OCI-LY7 (cell line): ENCODE measurements at regions of chr17 and their contacts with region 1.

Region 1: GRCh38 chr17:48878918-48879898 is 13.4 kb upstream of the ATP5MC1 start:
- DNase-seq: peak; percentile 76
- H3K4me3 ChIP-seq: no peak overlapping the region
- H3K27ac ChIP-seq: no peak overlapping the region
- H3K4me1 ChIP-seq: no peaks in the 10 kb centered on the region
- CTCF ChIP-seq: peak; percentile 97

Region 2: GRCh38 chr17:48671697-48672171 is 207.5 kb before region 1 on chr17:
- CTCF ChIA-PET with region 1: no interaction called
- POLR2A ChIA-PET with region 1: interaction called, 3 read pairs
- intact Hi-C with region 1: loop called (anchors 2 kb)
- DNase-seq: peak; percentile 38
- H3K4me3 ChIP-seq: no peak overlapping the region
- H3K27ac ChIP-seq: no peak overlapping the region
- H3K4me1 ChIP-seq: no peaks in the 10 kb centered on the region
- CTCF ChIP-seq: peak; percentile 85

Region 3: GRCh38 chr17:48678141-48678971 is 200.9 kb before region 1 on chr17:
- CTCF ChIA-PET with region 1: interaction called, 3 read pairs
- POLR2A ChIA-PET with region 1: interaction called, 3 read pairs
- intact Hi-C with region 1: loop called (anchors 2 kb)
- DNase-seq: peak; percentile 54
- H3K4me3 ChIP-seq: no peak overlapping the region
- H3K27ac ChIP-seq: no peak overlapping the region
- H3K4me1 ChIP-seq: no peaks in the 10 kb centered on the region
- CTCF ChIP-seq: peak; percentile 91

Region 4: GRCh38 chr17:48724251-48725003 is 154.8 kb before region 1 on chr17:
- CTCF ChIA-PET with region 1: interaction called, 6 read pairs
- POLR2A ChIA-PET with region 1: no interaction called
- intact Hi-C with region 1: loop called (anchors 2 kb)
- DNase-seq: peak; percentile 58
- H3K4me3 ChIP-seq: no peak overlapping the region
- H3K27ac ChIP-seq: no peak overlapping the region
- H3K4me1 ChIP-seq: no peaks in the 10 kb centered on the region
- CTCF ChIP-seq: peak; percentile 81

Region 5: DNA sequence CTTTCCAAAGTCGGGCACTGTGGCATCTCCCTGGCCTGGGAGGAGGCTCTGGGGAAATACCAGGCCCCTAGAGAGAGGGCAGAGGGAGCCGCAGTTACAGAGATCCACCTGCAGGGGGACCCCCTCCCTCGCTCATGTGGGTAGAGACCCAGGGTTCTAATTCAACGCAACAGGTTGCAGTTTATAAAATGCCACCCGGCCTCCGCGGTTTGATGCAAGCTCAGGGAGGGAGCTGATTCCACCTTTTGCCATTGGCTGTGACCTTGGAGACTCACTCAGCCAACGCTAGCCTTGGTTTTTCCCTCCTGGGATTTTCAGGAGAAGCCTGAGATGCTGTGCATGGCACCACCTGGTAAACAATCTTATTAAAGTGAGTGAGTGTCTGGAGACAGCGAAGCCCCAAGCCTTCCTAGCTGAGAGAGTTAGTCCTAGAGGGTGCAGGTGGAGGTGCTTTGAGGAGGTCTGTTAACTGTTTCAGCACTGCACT is 74.2 kb before region 1 on chr17:
- CTCF ChIA-PET with region 1: interaction called, 9 read pairs
- POLR2A ChIA-PET with region 1: no interaction called
- intact Hi-C with region 1: loop called (anchors 1 kb)
- DNase-seq: peak; percentile 55
- H3K4me3 ChIP-seq: no peak overlapping the region
- H3K27ac ChIP-seq: no peak overlapping the region
- H3K4me1 ChIP-seq: no peaks in the 10 kb centered on the region
- CTCF ChIP-seq: peak; percentile 92

Region 6: DNA sequence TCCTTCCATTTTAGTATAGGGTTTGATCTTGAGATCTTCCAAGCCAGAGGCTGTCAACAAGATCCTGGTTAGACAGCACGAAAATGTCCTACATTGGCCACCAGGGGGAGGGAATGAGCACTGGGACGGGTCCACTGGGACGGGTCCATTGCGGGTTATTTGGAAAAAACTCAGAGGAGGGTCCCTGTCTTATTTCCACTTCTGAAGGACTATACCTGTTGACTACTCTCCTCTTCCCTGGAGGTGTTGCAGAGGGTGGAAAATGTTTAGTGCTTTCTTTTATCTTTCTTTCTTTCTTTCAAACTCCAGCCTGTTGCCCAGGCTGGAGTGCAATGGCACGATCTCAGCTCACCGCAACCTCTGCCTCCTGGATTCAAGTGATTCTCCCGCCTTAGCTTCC is 64.7 kb before region 1 on chr17:
- CTCF ChIA-PET with region 1: interaction called, 3 read pairs
- POLR2A ChIA-PET with region 1: interaction called, 3 read pairs
- intact Hi-C with region 1: loop called (anchors 1 kb)
- DNase-seq: peak; percentile 61
- H3K4me3 ChIP-seq: no peak overlapping the region
- H3K27ac ChIP-seq: no peak overlapping the region
- H3K4me1 ChIP-seq: peaks cover 2% of the 10 kb centered on the region
- CTCF ChIP-seq: peak; percentile 83

Region 7: DNA sequence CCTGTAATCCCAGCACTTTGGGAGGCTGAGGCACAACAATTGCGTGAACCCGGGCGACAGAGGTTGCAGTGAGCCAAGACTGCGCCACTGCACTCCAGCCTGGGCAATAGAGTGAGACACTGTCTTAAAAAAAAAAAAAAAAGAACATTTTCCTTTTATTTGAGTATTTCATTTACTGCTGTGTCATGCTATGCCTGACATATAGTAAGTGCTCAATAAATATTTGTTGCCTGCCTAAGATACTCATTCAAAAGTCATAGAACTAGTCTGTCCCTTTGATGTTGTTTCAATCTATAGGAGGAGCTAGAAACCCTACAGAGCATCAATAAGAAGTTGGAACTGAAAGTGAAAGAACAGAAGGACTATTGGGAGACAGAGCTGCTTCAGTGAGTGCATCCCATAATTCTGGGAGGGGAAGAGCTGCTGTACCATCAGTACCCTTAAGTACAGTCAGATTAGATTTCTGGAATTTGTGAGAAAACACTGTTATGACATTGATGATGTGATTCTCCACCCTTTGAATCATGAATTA is 28.4 kb before region 1 on chr17:
- CTCF ChIA-PET with region 1: no interaction called
- POLR2A ChIA-PET with region 1: no interaction called
- intact Hi-C with region 1: no loop called
- DNase-seq: no peak
- H3K4me3 ChIP-seq: no peak overlapping the region
- H3K27ac ChIP-seq: no peak overlapping the region
- H3K4me1 ChIP-seq: no peaks in the 10 kb centered on the region
- CTCF ChIP-seq: no peak

Region 8: DNA sequence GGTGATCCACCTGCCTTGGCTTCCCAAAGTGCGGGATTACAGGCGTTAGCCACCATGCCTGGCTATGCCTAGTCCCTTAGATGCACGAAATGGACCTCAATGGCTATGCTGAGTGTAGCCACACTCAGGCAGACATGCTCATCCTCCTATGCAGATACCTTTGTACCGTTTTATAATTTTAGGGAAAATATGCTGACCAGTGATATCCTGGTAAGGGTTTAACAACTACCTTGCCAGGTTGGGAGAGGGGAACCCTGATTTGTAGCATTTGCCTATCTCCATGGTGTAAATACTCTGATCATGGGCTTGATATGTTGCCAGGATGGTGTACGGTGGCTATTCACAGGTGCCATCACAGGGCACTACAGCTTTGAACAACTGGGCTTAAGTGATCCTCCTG is 72.4 kb after region 1 on chr17:
- CTCF ChIA-PET with region 1: no interaction called
- POLR2A ChIA-PET with region 1: no interaction called
- intact Hi-C with region 1: no loop called
- DNase-seq: no peak
- H3K4me3 ChIP-seq: no peak overlapping the region
- H3K27ac ChIP-seq: no peak overlapping the region
- H3K4me1 ChIP-seq: peaks cover 9% of the 10 kb centered on the region
- CTCF ChIP-seq: no peak

Region 9: DNA sequence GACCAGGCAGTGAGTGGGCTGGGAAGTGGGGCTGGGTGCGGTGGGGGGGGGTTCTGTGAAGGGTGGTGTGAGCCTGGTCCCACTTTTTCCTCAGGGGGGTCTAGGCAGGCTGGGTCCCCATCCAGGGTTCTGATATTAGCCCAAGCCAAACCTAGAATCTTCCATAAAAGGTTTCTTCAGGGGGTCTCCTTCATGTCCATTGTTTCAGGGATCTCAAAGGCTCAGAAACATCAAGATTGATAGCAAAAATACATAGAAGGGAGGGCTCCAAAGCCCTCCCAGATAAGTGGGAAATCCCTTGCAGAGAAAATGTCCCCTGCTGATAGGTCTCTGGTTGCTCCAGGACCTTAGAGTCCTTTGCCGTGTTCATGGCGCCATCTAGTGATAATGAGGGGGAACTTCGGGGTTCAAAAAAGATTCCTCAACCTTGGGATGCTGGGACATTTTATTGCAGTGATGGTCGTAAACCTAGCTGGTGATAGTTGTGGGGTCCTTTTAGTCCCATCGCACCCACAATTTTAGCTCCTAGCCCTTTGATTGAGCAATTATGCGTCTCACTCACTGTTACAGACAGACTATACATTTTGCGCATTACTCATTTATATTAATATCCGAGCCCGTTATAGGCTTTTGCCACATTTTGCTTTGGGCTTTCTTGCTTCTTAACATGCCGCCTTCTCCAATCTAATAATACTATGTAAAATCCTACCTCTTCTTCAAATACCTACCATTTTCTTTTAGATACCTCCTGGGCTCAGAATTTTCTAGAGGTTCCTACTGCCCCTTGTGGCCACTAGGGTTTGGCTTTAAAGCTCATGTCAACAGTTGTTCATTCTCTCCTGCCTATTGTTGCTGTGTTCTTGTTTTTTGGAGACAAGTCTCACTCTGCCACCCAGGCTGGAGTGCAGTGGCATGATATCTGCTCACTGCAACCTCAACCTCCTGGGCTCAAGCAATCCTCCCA is 153.0 kb after region 1 on chr17:
- CTCF ChIA-PET with region 1: no interaction called
- POLR2A ChIA-PET with region 1: no interaction called
- intact Hi-C with region 1: loop called (anchors 1 kb)
- DNase-seq: peak; percentile 73
- H3K4me3 ChIP-seq: no peak overlapping the region
- H3K27ac ChIP-seq: no peak overlapping the region
- H3K4me1 ChIP-seq: no peaks in the 10 kb centered on the region
- CTCF ChIP-seq: peak; percentile 88

Region 10: DNA sequence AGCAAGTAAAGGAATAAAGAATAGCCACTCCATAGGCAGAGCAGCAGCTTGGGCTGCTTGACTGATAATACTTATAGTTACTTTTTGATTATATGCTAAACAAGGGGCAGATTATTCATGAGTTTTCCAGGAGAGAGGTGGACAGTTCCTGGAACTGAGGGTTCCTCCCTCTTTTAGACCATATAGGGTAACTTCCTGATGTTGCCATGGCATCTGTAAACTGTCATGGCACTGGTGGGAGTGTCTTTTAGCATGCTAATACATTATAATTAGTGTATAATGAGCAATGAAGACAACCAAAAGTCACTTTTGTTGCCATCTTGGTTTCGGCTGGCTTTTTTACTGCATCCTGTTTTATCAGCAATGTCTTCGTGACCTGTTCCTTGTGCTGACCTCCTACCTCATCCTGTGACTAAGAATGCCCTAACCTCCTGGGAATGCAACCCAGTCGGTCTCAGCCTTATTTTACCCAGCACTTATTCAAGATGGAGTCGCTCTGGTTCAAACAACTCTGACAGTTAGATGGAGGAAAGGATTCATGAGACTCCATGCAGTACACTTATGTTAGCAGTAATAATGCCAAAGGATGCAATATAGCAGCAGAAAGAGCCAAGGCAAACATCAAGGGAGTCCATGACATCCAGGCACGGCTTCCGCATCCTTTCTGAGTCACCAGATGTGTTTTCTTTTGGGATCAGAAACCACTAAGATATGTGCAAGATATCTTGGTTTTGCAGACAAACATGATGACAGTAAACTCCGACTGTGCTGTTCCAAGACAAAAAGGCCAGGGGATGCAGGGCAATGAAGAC is 197.6 kb after region 1 on chr17:
- CTCF ChIA-PET with region 1: no interaction called
- POLR2A ChIA-PET with region 1: no interaction called
- intact Hi-C with region 1: no loop called
- DNase-seq: no peak
- H3K4me3 ChIP-seq: no peak overlapping the region
- H3K27ac ChIP-seq: no peak overlapping the region
- H3K4me1 ChIP-seq: no peaks in the 10 kb centered on the region
- CTCF ChIP-seq: no peak